ENCODE measurements at regions of chr1 and their contacts with region 1.

Region 1: DNA sequence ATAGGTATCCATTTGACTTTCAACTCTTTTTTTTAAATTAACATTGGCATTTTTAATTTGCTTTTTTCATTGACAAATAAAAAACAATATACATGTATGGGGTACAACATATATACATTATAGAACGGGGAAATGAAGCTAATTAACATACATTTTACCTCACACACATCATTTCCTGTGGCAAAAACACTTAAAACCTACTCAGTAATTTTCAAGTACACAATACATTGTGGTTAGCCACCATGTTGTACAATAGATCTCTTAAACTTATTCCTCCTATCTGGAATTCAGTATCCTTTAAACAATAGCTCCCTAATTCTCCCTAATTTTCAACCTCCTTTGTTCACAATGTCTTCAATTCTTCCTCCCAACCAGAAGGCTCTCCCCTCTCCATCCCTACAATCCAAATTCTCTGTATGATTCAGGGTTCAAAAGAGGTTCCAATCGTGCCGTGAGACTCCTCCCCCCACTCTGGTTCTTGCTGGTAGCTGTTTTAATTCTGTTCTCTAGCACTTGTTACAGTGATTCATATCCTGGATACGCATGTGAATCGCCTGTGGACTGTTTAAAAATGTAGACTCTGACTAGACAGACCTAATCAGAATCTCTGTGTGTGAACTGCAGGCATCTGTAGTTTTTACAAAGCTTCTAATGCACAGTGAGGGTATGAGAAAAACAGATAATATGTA is 87.6 kb upstream of the DUSP10 start:
- DNase-seq: peak; percentile 84
- H3K4me3 Mint-ChIP-seq: peak overlapping the region; percentile 73
- H3K27ac Mint-ChIP-seq: peak overlapping the region; percentile 90
- H3K4me1 Mint-ChIP-seq: peaks cover 67% of the 10 kb centered on the region
- H3K27me3 Mint-ChIP-seq: no peaks in the 10 kb centered on the region

Region 2: GRCh38 chr1:221878134-221878533 is 48.7 kb after region 1 on chr1:
- intact Hi-C with region 1: loop called (anchors 1 kb)
- DNase-seq: no peak
- H3K4me3 Mint-ChIP-seq: no peak overlapping the region
- H3K27ac Mint-ChIP-seq: no peak overlapping the region
- H3K4me1 Mint-ChIP-seq: peaks cover 10% of the 10 kb centered on the region
- H3K27me3 Mint-ChIP-seq: peaks cover 2% of the 10 kb centered on the region